Lower leg skin (tissue), 4 donors: ENCODE measurements at regions of chr2 and their contacts with region 1.

Region 1: DNA sequence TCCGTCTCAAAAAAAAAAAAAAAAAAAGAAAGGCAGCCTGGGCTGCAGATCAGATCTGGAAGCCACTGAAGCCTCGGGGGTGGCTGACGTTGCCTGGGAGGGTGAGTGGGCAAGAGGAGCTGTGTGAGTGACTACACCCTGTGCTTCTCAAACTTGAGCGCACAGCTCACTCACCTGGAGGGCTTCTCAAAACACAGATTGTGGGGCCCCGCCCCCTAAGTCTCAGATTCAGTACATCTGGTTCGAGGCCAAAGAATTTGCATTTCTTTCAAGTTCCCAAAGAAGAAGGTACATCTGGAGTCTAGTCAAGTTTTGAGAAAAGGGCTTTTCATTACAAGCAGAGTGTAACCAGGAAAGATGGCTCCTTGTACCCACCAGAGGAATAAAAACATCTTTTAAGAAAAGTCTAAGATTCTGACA is 97.7 kb upstream of the CAB39 start:
- DNase-seq: no peak
- H3K4me3 ChIP-seq: no peak overlapping the region
- CTCF ChIP-seq: no peak
- POLR2A ChIP-seq: no peak

Region 2: GRCh38 chr2:229660951-229661350 is 954.0 kb before region 1 on chr2:
- intact Hi-C with region 1: no loop called
- DNase-seq: no peak
- H3K4me3 ChIP-seq: no peak overlapping the region
- CTCF ChIP-seq: no peak
- POLR2A ChIP-seq: no peak

Region 3: DNA sequence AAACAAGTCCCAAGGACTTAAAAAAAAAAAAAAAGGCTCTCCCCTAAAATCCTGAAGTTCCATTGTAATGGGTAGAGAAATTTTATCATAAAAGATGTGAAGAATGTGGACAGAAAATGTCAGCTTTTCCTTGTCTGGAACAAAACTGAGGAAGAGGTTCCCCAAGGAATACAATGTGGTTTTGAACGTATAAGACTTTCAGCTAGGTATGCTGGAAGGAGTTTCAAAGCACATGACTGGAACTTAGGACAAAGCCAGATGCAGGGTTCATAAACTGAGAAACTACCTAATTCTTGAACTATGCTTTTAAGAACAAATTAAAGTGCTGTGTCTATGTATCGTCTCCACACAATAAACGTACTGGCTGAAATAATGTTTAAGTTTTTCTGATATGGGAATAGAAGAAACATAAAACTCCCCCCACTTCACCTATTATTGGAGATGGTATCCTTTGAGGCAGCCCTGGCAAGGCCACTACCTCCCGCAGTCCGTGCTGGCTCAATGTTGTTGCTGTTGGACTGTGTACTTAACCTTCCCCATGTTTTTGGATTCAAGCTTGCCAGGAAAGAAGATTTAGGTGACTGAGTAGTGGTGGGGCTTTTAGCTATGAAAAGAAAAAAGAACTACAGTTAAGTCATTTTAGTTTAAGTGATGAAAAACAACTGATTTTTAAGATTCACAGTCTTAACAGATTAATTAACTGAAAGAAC is 816.3 kb before region 1 on chr2:
- intact Hi-C with region 1: loop called (anchors 10 kb)
- DNase-seq: no peak
- H3K4me3 ChIP-seq: no peak overlapping the region
- CTCF ChIP-seq: no peak
- POLR2A ChIP-seq: no peak

Region 4: DNA sequence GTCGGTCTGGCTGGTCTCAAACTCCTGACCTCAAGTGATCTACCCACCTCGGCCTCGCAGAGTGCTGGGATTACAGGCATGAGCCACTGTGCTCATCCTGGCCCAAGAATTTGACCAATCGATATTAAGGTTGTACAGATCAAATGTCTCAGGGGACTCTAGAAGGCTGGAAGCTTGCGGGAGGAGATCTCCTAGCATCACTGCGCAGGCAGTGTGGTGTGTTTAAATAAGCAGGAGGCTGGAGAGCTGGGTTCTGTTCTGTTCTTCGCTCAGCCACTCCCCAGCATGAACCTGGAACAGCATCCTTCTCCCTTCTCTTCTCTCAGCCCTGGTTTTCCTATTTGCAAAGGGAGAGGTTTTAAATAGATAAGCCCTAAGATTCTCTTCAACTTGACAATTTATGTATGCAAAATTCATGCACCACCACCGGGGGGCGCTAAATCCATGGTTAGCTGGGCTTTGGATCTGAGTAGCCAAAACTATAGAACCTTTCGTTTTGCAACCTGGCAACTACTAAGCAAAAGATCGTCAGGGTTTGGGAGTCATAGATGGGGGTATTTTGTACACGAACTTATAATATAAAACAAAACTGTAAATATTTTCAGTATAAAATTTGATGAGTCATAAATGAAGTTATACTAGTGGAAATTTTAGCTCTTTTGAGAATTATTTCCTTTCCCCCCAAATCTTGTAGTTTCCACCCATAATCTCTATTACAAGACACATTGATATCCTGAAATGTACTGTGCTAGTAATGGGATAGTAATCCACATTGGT is 606.8 kb before region 1 on chr2:
- intact Hi-C with region 1: loop called (anchors 5 kb)
- DNase-seq: peak; percentile 62 to 95
- H3K4me3 ChIP-seq: no peak overlapping the region
- CTCF ChIP-seq: peak in 1 of 3 donors; percentile 28
- POLR2A ChIP-seq: no peak